Tibial artery (tissue), 4 donors: ENCODE measurements at regions of chr5 and their contacts with region 1.

Region 1: GRCh38 chr5:72859127-72859526 is 42.7 kb downstream of the TNPO1 start:
- DNase-seq: no peak
- H3K4me3 ChIP-seq: no peak overlapping the region
- H3K27ac ChIP-seq: no peak overlapping the region
- H3K4me1 ChIP-seq: peaks cover 0 to 53% (median 11%) of the 10 kb centered on the region in 4 donors
- H3K27me3 ChIP-seq: no peaks in the 10 kb centered on the region
- CTCF ChIP-seq: no peak

Region 2: GRCh38 chr5:72955768-72956323 is 96.7 kb after region 1 on chr5 and contains the start of gene FCHO2:
- intact Hi-C with region 1: loop called (anchors 10 kb)
- DNase-seq: peak; percentile 98 to 99
- H3K4me3 ChIP-seq: peak within 1 kb of the TSS; percentile 87 to 92
- H3K27ac ChIP-seq: peak within 1 kb of the TSS; percentile 98
- H3K4me1 ChIP-seq: peaks cover 0 to 39% (median 9%) of the 10 kb centered on the region in 4 donors
- H3K27me3 ChIP-seq: no peaks in the 10 kb centered on the region
- CTCF ChIP-seq: peak; percentile 85 to 88